ENCODE measurements at regions of chr22 and their contacts with region 1.

Region 1: GRCh38 chr22:43151251-43152002 is at the start of gene TSPO:
- DNase-seq: peak; percentile 57
- H3K4me3 Mint-ChIP-seq: peak within 1 kb of the TSS; percentile 86
- H3K27ac Mint-ChIP-seq: peak within 1 kb of the TSS; percentile 80
- H3K4me1 Mint-ChIP-seq: peaks cover 33% of the 10 kb centered on the region
- H3K27me3 Mint-ChIP-seq: no peaks in the 10 kb centered on the region
- total RNA-seq, gene TSPO: 112 to 121 TPM

Region 2: GRCh38 chr22:43110444-43110926 is 40.9 kb before region 1 on chr22 and contains the start of gene BIK:
- CTCF ChIA-PET with region 1: no interaction called
- intact Hi-C with region 1: loop called (anchors 2 kb)
- DNase-seq: peak; percentile 49
- H3K4me3 Mint-ChIP-seq: peak within 1 kb of the TSS; percentile 69
- H3K27ac Mint-ChIP-seq: no peak within 1 kb of the TSS
- H3K4me1 Mint-ChIP-seq: peaks cover 5% of the 10 kb centered on the region
- H3K27me3 Mint-ChIP-seq: peaks cover 3% of the 10 kb centered on the region
- total RNA-seq, gene BIK: 2.0 to 2.5 TPM

Region 3: DNA sequence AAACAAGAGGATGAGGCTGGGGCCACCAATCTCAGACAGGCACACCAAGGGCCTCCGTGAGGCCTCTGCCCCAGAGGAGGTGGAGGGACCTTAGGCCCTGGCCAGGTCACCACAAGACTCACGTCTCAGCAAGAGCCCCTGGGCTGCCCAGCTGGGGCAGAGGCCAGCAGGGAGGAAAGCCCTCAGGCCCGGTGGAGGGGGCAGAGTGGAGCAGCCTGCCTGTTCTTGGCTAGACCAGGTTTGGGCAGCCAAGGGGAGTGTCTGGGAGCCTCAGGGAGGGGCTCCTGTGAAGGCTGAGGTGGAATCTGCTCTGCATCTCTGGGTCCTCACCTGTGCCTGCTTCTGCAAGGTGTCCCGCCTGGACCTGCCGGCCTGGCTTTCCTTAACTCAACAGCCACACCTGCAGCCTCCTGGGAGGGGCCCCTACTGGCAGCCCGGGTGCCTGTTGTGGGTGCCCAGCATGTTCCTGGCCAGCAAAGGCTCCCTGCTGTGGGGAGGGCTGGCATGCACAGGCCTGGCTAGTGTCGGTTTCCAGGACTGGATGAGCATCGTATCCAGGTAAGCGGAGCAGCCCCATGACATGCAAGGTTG is 23.6 kb after region 1 on chr22:
- CTCF ChIA-PET with region 1: no interaction called
- intact Hi-C with region 1: no loop called
- DNase-seq: no peak
- H3K4me3 Mint-ChIP-seq: no peak overlapping the region
- H3K27ac Mint-ChIP-seq: no peak overlapping the region
- H3K4me1 Mint-ChIP-seq: no peaks in the 10 kb centered on the region
- H3K27me3 Mint-ChIP-seq: no peaks in the 10 kb centered on the region

Measured in activated naive CD4-positive, alpha-beta T cell treated with anti-CD3 and anti-CD28 coated beads for 36 hours (primary cell).